CD8-positive, alpha-beta T cell (primary cell): ENCODE measurements at regions of chr15 and their contacts with region 1.

Region 1: GRCh38 chr15:74873036-74873755 is at the start of gene SCAMP2:
- DNase-seq: peak; percentile 82 to 96 (median 90)
- ATAC-seq: peak; percentile 93
- H3K4me3 ChIP-seq: peak within 1 kb of the TSS; percentile 84 to 96
- H3K4me3 Mint-ChIP-seq: peak within 1 kb of the TSS; percentile 98
- H3K27ac ChIP-seq: peak within 1 kb of the TSS; percentile 87 to 95
- H3K27ac Mint-ChIP-seq: peak within 1 kb of the TSS; percentile 95
- H3K4me1 ChIP-seq: peaks cover 43% of the 10 kb centered on the region
- H3K4me1 Mint-ChIP-seq: peaks cover 45% of the 10 kb centered on the region
- H3K27me3 ChIP-seq: no peaks in the 10 kb centered on the region
- H3K27me3 Mint-ChIP-seq: no peaks in the 10 kb centered on the region
- CTCF ChIP-seq: no peak
- total RNA-seq, gene SCAMP2: 48.7 to 57.2 TPM

Region 2: DNA sequence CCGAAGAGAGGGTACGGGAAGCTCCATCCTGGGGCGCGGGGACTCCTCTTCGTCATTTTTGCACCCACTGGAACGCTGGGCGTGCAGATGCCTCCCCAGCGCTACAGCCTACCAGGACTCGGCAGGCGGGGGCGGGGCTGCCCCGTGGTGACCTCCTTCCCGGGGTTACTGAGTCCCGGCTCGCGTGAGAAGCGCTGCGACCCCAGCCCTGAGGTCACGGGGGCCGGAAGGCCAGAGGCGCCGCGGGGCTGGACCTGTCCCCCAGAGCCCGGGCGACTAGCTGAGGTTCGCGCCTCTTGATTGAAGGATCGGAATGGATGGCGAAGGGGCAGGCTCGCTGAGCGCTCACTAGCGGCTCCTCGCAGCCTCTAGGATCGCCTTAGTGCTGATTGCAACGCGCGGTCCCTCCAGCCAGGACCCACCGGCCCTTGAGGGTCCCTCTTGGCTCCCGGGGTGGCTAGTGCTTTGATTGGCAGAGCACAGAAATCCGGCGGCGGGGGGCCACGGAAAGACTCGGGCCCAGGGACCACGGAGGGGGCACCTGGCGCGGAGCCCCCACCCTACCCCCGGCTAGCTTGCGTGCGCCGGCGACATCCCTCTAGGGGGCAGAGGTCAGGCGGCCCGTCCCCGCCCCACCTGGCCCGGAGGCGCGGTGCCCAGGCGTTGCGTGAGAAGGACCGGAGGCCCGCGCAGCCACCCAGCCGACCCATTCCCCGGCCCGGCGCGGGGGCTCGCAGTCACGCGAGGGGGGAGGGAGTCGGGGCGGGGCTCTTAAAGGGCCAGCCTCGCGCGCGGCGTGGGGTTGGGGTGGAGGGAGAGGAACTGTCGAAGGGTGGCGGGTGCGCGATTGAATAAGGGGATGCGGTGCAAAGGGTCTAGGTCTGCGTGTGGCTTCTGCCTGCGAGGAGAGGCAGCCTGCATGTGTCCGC is 147.1 kb before region 1 on chr15:
- CTCF ChIA-PET with region 1: no interaction called
- POLR2A ChIA-PET with region 1: no interaction called
- intact Hi-C with region 1: no loop called
- DNase-seq: peak in 7 of 9 experiments; percentile 32 to 73 (median 41)
- ATAC-seq: peak; percentile 69
- H3K4me3 ChIP-seq: peak overlapping the region; percentile 68 to 73
- H3K4me3 Mint-ChIP-seq: peak overlapping the region; percentile 77
- H3K27ac ChIP-seq: no peak overlapping the region
- H3K27ac Mint-ChIP-seq: no peak overlapping the region
- H3K4me1 ChIP-seq: peaks cover 7% of the 10 kb centered on the region
- H3K4me1 Mint-ChIP-seq: peaks cover 9% of the 10 kb centered on the region
- H3K27me3 ChIP-seq: peaks cover 2 to 5% of the 10 kb centered on the region in 2 experiments
- H3K27me3 Mint-ChIP-seq: peaks cover 26% of the 10 kb centered on the region
- CTCF ChIP-seq: peak; percentile 25

Region 3: GRCh38 chr15:74835307-74835823 is 37.8 kb before region 1 on chr15:
- CTCF ChIA-PET with region 1: interaction called, 10 read pairs
- POLR2A ChIA-PET with region 1: no interaction called
- intact Hi-C with region 1: no loop called
- DNase-seq: peak in 8 of 9 experiments; percentile 13 to 62 (median 44)
- ATAC-seq: peak; percentile 65
- H3K4me3 ChIP-seq: no peak overlapping the region
- H3K4me3 Mint-ChIP-seq: no peak overlapping the region
- H3K27ac ChIP-seq: no peak overlapping the region
- H3K27ac Mint-ChIP-seq: no peak overlapping the region
- H3K4me1 ChIP-seq: no peaks in the 10 kb centered on the region
- H3K4me1 Mint-ChIP-seq: no peaks in the 10 kb centered on the region
- H3K27me3 ChIP-seq: no peaks in the 10 kb centered on the region
- H3K27me3 Mint-ChIP-seq: peaks cover 2% of the 10 kb centered on the region
- CTCF ChIP-seq: peak; percentile 62

Region 4: DNA sequence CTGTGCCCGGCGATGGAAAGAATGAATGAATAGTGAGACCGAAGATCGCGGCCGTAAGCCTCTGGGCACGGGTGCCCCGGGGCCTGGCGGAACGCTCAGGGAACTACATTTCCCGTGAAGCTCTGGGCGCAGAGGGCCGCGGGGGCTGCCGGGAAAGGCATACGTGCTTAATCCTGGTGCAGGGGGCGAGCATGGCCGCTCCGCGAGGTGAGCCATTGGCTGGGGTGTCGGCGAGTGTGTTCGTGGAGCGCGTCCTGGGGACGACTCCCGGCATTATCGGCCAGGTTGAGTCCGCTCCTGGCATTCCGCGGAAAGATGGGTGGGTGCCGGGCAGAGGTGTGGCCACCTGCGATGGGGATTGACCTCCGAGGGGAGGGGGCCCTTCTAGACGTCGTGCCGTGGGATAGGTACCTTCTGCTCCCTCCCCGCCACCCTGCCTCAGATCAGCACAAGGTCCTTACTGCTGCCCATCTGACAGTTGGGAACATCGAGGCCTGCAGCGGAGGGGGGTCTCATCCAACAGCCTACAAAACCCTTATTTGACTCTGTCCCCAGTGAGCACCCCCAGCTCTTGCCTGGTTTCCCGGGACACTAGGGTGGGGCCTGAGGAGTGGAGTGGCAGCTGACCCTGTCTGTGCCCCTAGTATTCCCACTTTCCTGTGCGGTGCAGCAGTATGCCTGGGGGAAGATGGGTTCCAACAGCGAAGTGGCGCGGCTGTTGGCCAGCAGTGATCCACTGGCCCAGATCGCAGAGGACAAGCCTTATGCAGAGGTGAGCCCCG is 16.9 kb after region 1 on chr15 and contains the start of gene MPI:
- CTCF ChIA-PET with region 1: interaction called, 7 read pairs
- POLR2A ChIA-PET with region 1: interaction called, 9 read pairs
- intact Hi-C with region 1: loop called (anchors 1 kb)
- DNase-seq: peak; percentile 66 to 89 (median 83)
- ATAC-seq: peak; percentile 95
- H3K4me3 ChIP-seq: peak within 1 kb of the TSS; percentile 80 to 82
- H3K4me3 Mint-ChIP-seq: peak within 1 kb of the TSS; percentile 92
- H3K27ac ChIP-seq: peak within 1 kb of the TSS; percentile 79
- H3K27ac Mint-ChIP-seq: peak within 1 kb of the TSS; percentile 88
- H3K4me1 ChIP-seq: peaks cover 39% of the 10 kb centered on the region
- H3K4me1 Mint-ChIP-seq: peaks cover 46% of the 10 kb centered on the region
- H3K27me3 ChIP-seq: no peaks in the 10 kb centered on the region
- H3K27me3 Mint-ChIP-seq: no peaks in the 10 kb centered on the region
- CTCF ChIP-seq: no peak
- total RNA-seq, gene MPI: 18.3 to 19.9 TPM

Region 5: DNA sequence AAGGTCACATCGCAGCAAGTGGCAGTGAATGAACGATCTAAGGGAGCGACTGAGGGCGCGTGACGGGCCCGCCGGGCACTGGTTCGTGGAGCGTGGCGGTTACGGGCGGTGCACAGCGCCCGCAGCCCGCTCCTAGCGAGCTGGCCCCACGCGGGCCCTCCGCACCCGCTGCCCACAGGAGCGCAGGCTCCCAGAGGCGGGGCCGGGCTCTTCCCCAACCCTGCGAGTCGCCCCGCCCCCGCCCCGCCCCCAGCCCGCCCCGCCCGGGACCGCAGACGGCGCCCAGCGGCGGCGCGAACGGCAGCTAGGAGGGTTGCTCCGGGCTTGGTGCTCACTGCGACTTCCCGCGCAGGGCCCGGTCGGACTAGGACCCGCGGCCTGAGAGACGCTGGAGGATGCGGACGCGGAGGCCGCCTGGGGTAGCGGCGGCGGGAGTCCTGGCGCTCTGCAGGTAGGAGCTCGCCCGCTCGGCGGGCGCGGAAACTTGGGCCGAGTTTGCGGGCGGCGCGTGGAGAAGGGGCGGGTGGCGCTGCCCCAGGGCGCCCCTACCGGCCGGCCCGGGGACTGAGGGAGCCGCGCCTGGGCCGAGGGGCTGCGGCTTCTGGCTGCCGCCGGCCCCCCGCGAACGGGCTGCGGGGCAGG is 328.5 kb after region 1 on chr15 and contains the start of gene C15orf39:
- CTCF ChIA-PET with region 1: no interaction called
- POLR2A ChIA-PET with region 1: no interaction called
- intact Hi-C with region 1: no loop called
- DNase-seq: peak; percentile 50 to 88 (median 72)
- ATAC-seq: peak; percentile 56
- H3K4me3 ChIP-seq: peak within 1 kb of the TSS; percentile 83 to 88
- H3K4me3 Mint-ChIP-seq: peak within 1 kb of the TSS; percentile 93
- H3K27ac ChIP-seq: peak within 1 kb of the TSS; percentile 82 to 85
- H3K27ac Mint-ChIP-seq: peak within 1 kb of the TSS; percentile 94
- H3K4me1 ChIP-seq: peaks cover 23% of the 10 kb centered on the region
- H3K4me1 Mint-ChIP-seq: peaks cover 47% of the 10 kb centered on the region
- H3K27me3 ChIP-seq: no peaks in the 10 kb centered on the region
- H3K27me3 Mint-ChIP-seq: no peaks in the 10 kb centered on the region
- CTCF ChIP-seq: peak; percentile 92
- total RNA-seq, gene C15orf39: 36.6 to 37.6 TPM